Psoas muscle (tissue), 8 donors: ENCODE measurements at regions of chr4 and their contacts with region 1.

Region 1: GRCh38 chr4:17968721-17969120 is 52.8 kb downstream of the LCORL start:
- DNase-seq: no peak
- ATAC-seq: no peak
- H3K4me3 ChIP-seq: no peak overlapping the region
- H3K27ac ChIP-seq: no peak overlapping the region
- H3K4me1 ChIP-seq: peaks cover 12% of the 10 kb centered on the region
- H3K27me3 ChIP-seq: no peaks in the 10 kb centered on the region
- CTCF ChIP-seq: no peak

Region 2: GRCh38 chr4:18007625-18008024 is 38.9 kb after region 1 on chr4:
- intact Hi-C with region 1: loop called in 1 of 2 experiments (anchors 5 kb)
- DNase-seq: no peak
- ATAC-seq: no peak
- H3K4me3 ChIP-seq: no peak overlapping the region
- H3K27ac ChIP-seq: no peak overlapping the region
- H3K4me1 ChIP-seq: peaks cover 29% of the 10 kb centered on the region
- H3K27me3 ChIP-seq: no peaks in the 10 kb centered on the region
- CTCF ChIP-seq: no peak